ENCODE measurements at regions of chr1 and their contacts with region 1.

Region 1: GRCh38 chr1:99758073-99758511 is 8.3 kb downstream of the FRRS1 start:
- DNase-seq: no peak
- H3K4me3 ChIP-seq: no peak overlapping the region
- H3K4me3 Mint-ChIP-seq: peak overlapping the region; percentile 10
- H3K27ac Mint-ChIP-seq: no peak overlapping the region
- H3K4me1 ChIP-seq: 0 out of 2 replicates have a peak, but pooled peaks cover 5% of the 10 kb centered on the region
- H3K4me1 Mint-ChIP-seq: peaks cover 14% of the 10 kb centered on the region
- H3K27me3 ChIP-seq: no peaks in the 10 kb centered on the region
- H3K27me3 Mint-ChIP-seq: no peaks in the 10 kb centered on the region
- CTCF ChIP-seq: no peak

Region 2: DNA sequence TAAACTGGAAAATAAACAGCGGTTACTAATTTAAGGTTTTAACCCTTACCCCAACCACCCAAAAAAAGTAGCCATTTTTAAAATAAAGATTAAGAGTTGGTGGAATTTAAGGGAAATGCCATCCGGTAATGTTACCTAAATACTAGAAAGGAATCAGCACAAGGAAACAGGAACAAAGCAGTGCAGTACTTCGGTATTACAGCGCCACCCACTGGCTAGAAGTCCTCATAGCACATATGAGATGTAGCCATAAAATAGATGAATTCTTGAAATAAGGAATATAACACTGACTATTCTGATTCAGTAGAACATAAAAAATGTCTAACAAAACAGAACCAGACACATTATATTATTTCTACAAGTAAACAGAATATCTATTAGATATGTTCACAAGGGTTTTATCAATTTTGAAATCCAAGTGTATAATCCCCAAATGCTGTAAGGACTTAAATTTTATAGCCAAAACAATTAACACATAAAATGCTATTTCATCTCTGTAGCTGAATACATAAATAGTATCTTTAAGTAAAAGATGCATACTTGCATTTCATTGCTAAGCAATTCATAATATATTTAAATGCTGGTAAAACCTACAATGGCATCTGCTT is 50.5 kb before region 1 on chr1:
- CTCF ChIA-PET with region 1: no interaction called
- POLR2A ChIA-PET with region 1: no interaction called
- intact Hi-C with region 1: loop called (anchors 1 kb)
- DNase-seq: peak; percentile 40 to 51
- H3K4me3 ChIP-seq: no peak overlapping the region
- H3K4me3 Mint-ChIP-seq: no peak overlapping the region
- H3K27ac Mint-ChIP-seq: no peak overlapping the region
- H3K4me1 ChIP-seq: no peaks in the 10 kb centered on the region
- H3K4me1 Mint-ChIP-seq: no peaks in the 10 kb centered on the region
- H3K27me3 ChIP-seq: no peaks in the 10 kb centered on the region
- H3K27me3 Mint-ChIP-seq: no peaks in the 10 kb centered on the region
- CTCF ChIP-seq: peak; percentile 63

Region 3: DNA sequence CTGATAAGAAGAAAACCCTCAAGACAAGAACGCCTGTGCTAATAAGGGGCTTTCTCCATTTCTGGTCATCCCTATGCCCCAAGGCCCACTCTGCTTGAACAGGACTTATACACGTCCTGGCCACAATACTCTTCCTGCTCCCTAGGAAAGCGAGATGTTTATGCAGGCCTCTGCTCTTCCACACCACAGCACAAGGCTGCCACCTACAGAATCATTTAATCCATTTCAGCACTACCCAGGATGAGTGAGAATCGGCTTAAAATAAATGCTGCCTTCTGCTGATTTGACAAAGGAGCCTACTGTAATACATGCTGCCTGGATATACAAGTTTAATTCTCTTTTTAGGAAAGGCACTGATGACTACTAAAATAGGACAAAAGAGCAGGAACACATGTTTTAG is 21.1 kb before region 1 on chr1:
- CTCF ChIA-PET with region 1: no interaction called
- POLR2A ChIA-PET with region 1: no interaction called
- intact Hi-C with region 1: loop called (anchors 2 kb)
- DNase-seq: peak; percentile 34 to 45
- H3K4me3 ChIP-seq: no peak overlapping the region
- H3K4me3 Mint-ChIP-seq: no peak overlapping the region
- H3K27ac Mint-ChIP-seq: no peak overlapping the region
- H3K4me1 ChIP-seq: peaks cover 13% of the 10 kb centered on the region
- H3K4me1 Mint-ChIP-seq: peaks cover 12% of the 10 kb centered on the region
- H3K27me3 ChIP-seq: no peaks in the 10 kb centered on the region
- H3K27me3 Mint-ChIP-seq: no peaks in the 10 kb centered on the region
- CTCF ChIP-seq: peak in 1 of 2 experiments; percentile 37

Measured in Caco-2 (cell line).